Caco-2 (cell line): ENCODE measurements at regions of chr1 and their contacts with region 1.

Region 1: DNA sequence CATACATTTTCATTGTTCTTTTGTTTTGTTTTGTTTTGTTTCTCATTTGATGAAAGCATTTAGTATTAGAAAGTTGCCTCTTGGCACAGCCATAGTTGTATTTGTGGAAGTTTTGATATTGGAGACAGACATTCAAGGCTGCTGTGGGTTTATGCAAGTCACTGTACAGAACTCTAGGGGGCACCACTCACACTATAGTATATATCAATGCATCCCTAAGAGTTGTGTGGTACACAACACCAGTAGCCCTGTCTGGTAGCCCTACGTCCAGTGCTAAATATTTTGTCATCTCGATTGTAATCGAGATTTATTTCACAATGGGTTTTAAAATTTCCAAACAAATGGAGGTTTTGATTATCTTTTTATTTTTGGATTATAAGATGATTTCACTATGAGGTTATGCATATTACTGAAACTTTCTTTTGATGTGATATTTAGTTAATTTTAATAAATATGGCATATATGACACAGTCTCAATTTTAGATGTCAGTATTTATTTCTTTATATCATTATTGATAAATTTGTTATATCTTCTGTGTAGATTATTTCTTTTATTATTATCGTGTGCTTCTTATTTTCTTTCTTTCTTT is 112.2 kb downstream of the NR5A2 start:
- DNase-seq: peak in 1 of 2 experiments; percentile 42
- H3K4me3 ChIP-seq: no peak overlapping the region
- H3K4me3 Mint-ChIP-seq: no peak overlapping the region
- H3K27ac Mint-ChIP-seq: no peak overlapping the region
- H3K4me1 ChIP-seq: no peaks in the 10 kb centered on the region
- H3K4me1 Mint-ChIP-seq: no peaks in the 10 kb centered on the region
- H3K27me3 ChIP-seq: no peaks in the 10 kb centered on the region
- H3K27me3 Mint-ChIP-seq: no peaks in the 10 kb centered on the region
- CTCF ChIP-seq: peak; percentile 41 to 54

Region 2: GRCh38 chr1:200306944-200307754 is 167.4 kb after region 1 on chr1:
- CTCF ChIA-PET with region 1: no interaction called
- POLR2A ChIA-PET with region 1: no interaction called
- intact Hi-C with region 1: loop called (anchors 1 kb)
- DNase-seq: peak in 1 of 2 experiments; percentile 47
- H3K4me3 ChIP-seq: no peak overlapping the region
- H3K4me3 Mint-ChIP-seq: no peak overlapping the region
- H3K27ac Mint-ChIP-seq: no peak overlapping the region
- H3K4me1 ChIP-seq: no peaks in the 10 kb centered on the region
- H3K4me1 Mint-ChIP-seq: no peaks in the 10 kb centered on the region
- H3K27me3 ChIP-seq: no peaks in the 10 kb centered on the region
- H3K27me3 Mint-ChIP-seq: no peaks in the 10 kb centered on the region
- CTCF ChIP-seq: peak; percentile 77 to 83

Region 3: DNA sequence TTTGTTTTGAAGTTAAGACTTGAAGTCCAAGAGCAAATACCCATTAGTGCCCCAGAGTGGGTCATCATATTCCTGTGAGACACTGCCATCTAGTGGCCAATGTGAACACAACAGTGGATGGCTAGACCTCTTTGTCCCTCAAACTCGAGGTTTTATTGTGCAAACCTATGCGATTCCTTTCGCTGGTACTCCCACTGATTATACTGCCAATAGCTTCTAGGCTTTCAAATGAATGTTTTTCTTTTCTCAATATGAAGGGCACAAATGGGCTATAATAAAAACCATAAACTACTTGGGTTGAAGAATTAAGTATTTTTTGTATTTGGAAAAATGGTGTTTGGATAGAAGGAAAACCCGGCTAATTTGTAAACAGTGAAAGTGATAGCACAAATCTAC is 370.5 kb after region 1 on chr1:
- CTCF ChIA-PET with region 1: no interaction called
- POLR2A ChIA-PET with region 1: no interaction called
- intact Hi-C with region 1: loop called (anchors 1 kb)
- DNase-seq: peak; percentile 73 to 83
- H3K4me3 ChIP-seq: no peak overlapping the region
- H3K4me3 Mint-ChIP-seq: no peak overlapping the region
- H3K27ac Mint-ChIP-seq: no peak overlapping the region
- H3K4me1 ChIP-seq: 0 out of 2 replicates have a peak, but pooled peaks cover 5% of the 10 kb centered on the region
- H3K4me1 Mint-ChIP-seq: no peaks in the 10 kb centered on the region
- H3K27me3 ChIP-seq: no peaks in the 10 kb centered on the region
- H3K27me3 Mint-ChIP-seq: peaks cover 8% of the 10 kb centered on the region
- CTCF ChIP-seq: peak; percentile 83 to 87